Natural killer cell (primary cell): ENCODE measurements at regions of chr2 and their contacts with region 1.

Region 1: DNA sequence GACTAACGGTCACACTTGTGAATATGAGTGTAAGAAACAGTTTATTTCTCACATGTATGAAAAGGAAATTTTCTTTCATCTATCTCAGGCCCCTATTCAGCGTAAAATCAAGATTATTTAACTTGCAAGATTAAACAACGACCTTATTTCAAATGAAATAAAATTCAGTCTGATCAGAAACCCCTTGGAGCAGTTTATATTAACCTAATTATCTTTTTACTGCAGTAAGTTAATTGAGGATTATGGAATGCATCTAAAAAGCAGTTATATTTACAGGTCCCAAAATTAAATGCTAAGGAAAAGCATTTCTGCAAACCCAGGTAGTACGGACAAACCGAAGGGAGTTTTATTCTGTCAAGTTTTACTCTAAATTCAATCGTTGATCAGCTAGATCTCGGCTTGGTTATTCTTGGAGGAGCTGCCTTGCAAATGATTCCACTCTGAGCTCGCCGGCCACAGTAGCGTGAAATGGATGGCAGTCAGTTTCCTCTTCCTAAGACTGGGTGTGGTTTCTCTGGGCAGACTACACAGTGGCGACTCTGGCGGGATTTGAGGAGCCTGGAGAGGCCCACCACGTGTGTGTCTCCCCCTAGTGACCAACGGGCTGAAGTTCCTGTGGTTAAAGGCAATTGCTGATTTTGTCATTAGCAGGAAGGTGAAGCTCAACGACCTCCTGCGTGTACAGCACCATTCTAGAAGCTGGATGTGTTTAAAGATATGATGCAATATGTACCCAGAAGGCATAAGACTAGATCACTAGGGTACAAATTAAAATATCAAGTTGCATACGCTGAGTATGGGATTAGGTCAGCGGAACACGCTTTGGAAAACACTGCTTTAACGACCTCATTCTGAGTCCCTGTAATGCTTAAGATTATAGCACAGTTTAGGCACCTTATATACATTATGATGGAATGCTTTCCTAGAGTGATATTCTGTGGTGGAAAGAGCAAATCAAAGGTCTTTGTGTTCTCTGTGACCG is 36.4 kb downstream of the PRKRA start:
- DNase-seq: peak; percentile 59 to 89
- ATAC-seq: peak; percentile 75 to 85 (median 76)
- H3K4me3 ChIP-seq: peak overlapping the region; percentile 59
- H3K4me3 Mint-ChIP-seq: peak overlapping the region; percentile 96
- H3K27ac ChIP-seq: peak overlapping the region; percentile 73
- H3K27ac Mint-ChIP-seq: peak overlapping the region; percentile 84 to 99
- H3K4me1 ChIP-seq: peaks cover 12% of the 10 kb centered on the region
- H3K4me1 Mint-ChIP-seq: peaks cover 22 to 27% of the 10 kb centered on the region in 2 donors
- H3K27me3 ChIP-seq: no peaks in the 10 kb centered on the region
- H3K27me3 Mint-ChIP-seq: no peaks in the 10 kb centered on the region
- CTCF ChIP-seq: peak; percentile 76

Region 2: GRCh38 chr2:178397002-178397605 is 17.5 kb before region 1 on chr2:
- intact Hi-C with region 1: loop called (anchors 1 kb)
- DNase-seq: peak in 1 of 2 donors; percentile 72
- ATAC-seq: peak in 2 of 3 donors; percentile 61 to 68
- H3K4me3 ChIP-seq: no peak overlapping the region
- H3K4me3 Mint-ChIP-seq: no peak overlapping the region
- H3K27ac ChIP-seq: no peak overlapping the region
- H3K27ac Mint-ChIP-seq: no peak overlapping the region
- H3K4me1 ChIP-seq: no peaks in the 10 kb centered on the region
- H3K4me1 Mint-ChIP-seq: no peaks in the 10 kb centered on the region
- H3K27me3 ChIP-seq: no peaks in the 10 kb centered on the region
- H3K27me3 Mint-ChIP-seq: peaks cover 14 to 27% of the 10 kb centered on the region in 2 donors
- CTCF ChIP-seq: peak; percentile 79